Naive thymus-derived CD4-positive, alpha-beta T cell (primary cell): ENCODE measurements at regions of chr21 and their contacts with region 1.

Region 1: GRCh38 chr21:14737922-14738321 is 191.8 kb upstream of the SAMSN1 start:
- DNase-seq: peak in 7 of 9 donors; percentile 54 to 80 (median 72)
- ATAC-seq: peak; percentile 94
- H3K4me3 ChIP-seq: no peak overlapping the region
- H3K4me3 Mint-ChIP-seq: peak overlapping the region in 1 of 10 donors; percentile 23
- H3K27ac ChIP-seq: no peak overlapping the region
- H3K27ac Mint-ChIP-seq: peak overlapping the region in 1 of 9 donors; percentile 7
- H3K4me1 ChIP-seq: peaks cover 0 to 6% of the 10 kb centered on the region in 2 donors
- H3K4me1 Mint-ChIP-seq: peaks cover 0 to 43% (median 8%) of the 10 kb centered on the region in 7 donors
- H3K27me3 ChIP-seq: no peaks in the 10 kb centered on the region
- H3K27me3 Mint-ChIP-seq: peaks cover 0 to 5% (median 3%) of the 10 kb centered on the region in 5 donors

Region 2: DNA sequence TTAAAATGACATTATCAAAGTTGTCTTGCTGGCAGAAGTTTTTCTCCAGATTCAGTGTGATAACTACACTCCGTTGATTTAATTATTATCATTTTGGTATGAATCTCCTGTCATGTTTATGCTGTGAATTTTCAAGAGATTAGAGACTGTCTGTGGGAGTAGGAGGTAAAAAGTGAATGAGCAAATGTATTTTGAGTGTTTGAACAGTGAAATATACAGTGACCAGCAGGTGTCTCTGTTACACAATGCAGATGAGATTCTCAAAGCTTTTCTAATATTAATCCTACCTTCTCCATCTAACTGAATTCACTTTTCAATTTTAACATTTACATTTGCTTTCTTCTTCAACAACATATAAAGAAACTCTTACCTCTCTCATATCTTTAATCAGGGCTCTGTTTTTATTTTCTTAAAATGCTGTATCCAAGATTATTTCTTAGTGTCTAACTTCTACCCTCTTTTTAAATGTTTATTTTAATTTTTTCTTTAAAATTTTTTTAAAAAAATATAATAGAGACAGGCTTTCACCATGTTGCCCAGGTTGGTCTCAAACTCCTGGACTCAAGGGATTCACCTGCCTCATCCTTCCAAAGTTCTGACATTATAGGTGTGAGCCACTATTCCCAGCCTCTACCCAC is 334.1 kb before region 1 on chr21:
- CTCF ChIA-PET with region 1: interaction called, 9 read pairs
- POLR2A ChIA-PET with region 1: no interaction called
- intact Hi-C with region 1: loop called (anchors 1 kb)
- DNase-seq: peak in 5 of 9 donors; percentile 19 to 55 (median 39)
- ATAC-seq: peak; percentile 79
- H3K4me3 ChIP-seq: no peak overlapping the region
- H3K4me3 Mint-ChIP-seq: no peak overlapping the region
- H3K27ac ChIP-seq: no peak overlapping the region
- H3K27ac Mint-ChIP-seq: no peak overlapping the region
- H3K4me1 ChIP-seq: no peaks in the 10 kb centered on the region
- H3K4me1 Mint-ChIP-seq: no peaks in the 10 kb centered on the region
- H3K27me3 ChIP-seq: no peaks in the 10 kb centered on the region
- H3K27me3 Mint-ChIP-seq: peaks cover 0 to 1% (median 0%) of the 10 kb centered on the region in 5 donors

Region 3: DNA sequence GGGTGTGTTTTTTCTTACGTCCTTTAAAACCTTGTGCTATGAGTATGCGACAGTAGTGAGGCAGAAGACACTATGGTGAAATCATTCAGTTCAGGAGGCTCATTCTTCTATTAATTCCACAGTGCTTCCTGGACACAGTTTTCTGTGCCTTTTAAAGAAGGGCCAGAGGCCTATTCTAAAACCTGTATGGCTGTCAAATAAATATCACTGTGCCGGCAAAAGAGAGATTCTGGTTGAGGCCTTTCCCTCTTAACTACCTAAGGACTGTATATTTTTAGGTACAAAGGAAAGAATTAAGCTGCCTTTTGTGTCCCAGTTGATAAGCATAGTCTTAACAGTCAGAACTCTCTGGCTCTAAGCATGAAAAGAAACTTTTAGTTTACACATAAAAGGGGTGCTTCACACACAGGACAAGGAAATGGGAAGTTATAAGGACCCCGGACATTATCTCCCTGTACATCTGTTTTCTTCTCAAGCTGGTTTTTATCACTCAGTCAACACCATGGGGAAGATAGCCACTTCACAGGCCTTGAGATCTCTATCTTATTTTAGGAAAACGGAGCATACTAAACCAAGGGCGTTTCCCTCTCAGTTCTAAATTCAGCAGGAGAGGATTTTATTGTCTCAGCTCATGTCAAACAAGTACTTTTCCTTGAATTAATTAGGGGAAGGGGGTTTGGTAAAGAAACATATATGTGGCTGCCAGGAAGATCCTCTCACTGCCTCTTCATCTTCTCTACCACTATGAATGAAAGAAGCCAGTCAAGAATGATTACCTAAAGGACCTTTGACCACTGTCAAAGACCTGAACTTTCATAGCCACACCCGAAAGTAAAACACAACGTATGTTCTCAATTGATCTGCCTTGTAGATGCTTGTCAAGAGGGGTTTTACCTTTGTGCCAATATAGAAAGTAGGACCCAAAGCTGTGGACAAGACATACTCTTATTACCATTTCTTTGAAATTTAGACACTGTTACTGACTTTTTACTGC is 283.6 kb before region 1 on chr21:
- CTCF ChIA-PET with region 1: interaction called, 3 read pairs
- POLR2A ChIA-PET with region 1: no interaction called
- intact Hi-C with region 1: loop called (anchors 2 to 5 kb)
- DNase-seq: no peak
- ATAC-seq: no peak
- H3K4me3 ChIP-seq: no peak overlapping the region
- H3K4me3 Mint-ChIP-seq: peak overlapping the region in 1 of 10 donors; percentile 53
- H3K27ac ChIP-seq: no peak overlapping the region
- H3K27ac Mint-ChIP-seq: peak overlapping the region in 2 of 9 donors; percentile 57 to 87
- H3K4me1 ChIP-seq: peaks cover 0 to 4% of the 10 kb centered on the region in 2 donors
- H3K4me1 Mint-ChIP-seq: peaks cover 0 to 62% (median 10%) of the 10 kb centered on the region in 7 donors
- H3K27me3 ChIP-seq: no peaks in the 10 kb centered on the region
- H3K27me3 Mint-ChIP-seq: no peaks in the 10 kb centered on the region

Region 4: GRCh38 chr21:14591882-14592281 is 146.0 kb before region 1 on chr21:
- CTCF ChIA-PET with region 1: no interaction called
- POLR2A ChIA-PET with region 1: no interaction called
- intact Hi-C with region 1: loop called in 1 of 2 experiments (anchors 2 kb)
- DNase-seq: peak in 4 of 9 donors; percentile 6 to 24 (median 11)
- ATAC-seq: peak; percentile 91
- H3K4me3 ChIP-seq: no peak overlapping the region
- H3K4me3 Mint-ChIP-seq: peak overlapping the region in 3 of 10 donors; percentile 3 to 70 (median 22)
- H3K27ac ChIP-seq: no peak overlapping the region
- H3K27ac Mint-ChIP-seq: peak overlapping the region in 4 of 9 donors; percentile 4 to 90 (median 33)
- H3K4me1 ChIP-seq: peaks cover 3 to 11% of the 10 kb centered on the region in 2 donors
- H3K4me1 Mint-ChIP-seq: peaks cover 8 to 43% (median 15%) of the 10 kb centered on the region in 7 donors
- H3K27me3 ChIP-seq: no peaks in the 10 kb centered on the region
- H3K27me3 Mint-ChIP-seq: no peaks in the 10 kb centered on the region